SK-N-SH (cell line): ENCODE measurements at regions of chr7 and their contacts with region 1.

Region 1: DNA sequence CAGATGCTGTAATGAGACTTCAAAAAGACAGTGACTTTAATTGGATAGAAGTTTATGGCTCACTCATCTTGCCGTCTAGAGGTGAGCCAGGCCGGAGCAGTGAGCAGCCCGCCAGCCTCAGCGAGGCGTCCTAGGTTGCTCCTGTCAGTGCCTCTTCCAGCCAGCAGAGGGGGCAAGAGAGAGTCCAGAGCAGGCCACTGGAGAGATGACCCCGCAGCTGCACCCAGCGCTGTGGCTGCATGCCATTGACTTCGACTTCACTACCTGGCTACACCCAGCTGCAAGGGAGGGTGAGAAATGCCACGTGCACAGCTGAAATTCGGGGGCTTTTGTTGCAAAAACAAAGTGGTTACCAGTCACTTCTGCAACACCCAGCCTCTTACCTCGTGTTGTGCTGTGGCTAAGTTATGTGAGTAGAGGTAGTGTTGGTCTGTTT is 26.5 kb downstream of the NUB1 start:
- DNase-seq: peak; percentile 91
- H3K4me3 ChIP-seq: no peak overlapping the region
- H3K27ac ChIP-seq: no peak overlapping the region
- H3K4me1 ChIP-seq: peaks cover 0 to 13% of the 10 kb centered on the region in 2 experiments; a peak in 2 of 4 replicates
- H3K27me3 ChIP-seq: no peaks in the 10 kb centered on the region
- CTCF ChIP-seq: peak; percentile 99
- EP300 ChIP-seq: no peak
- RAD21 ChIP-seq: peak; percentile 90

Region 2: DNA sequence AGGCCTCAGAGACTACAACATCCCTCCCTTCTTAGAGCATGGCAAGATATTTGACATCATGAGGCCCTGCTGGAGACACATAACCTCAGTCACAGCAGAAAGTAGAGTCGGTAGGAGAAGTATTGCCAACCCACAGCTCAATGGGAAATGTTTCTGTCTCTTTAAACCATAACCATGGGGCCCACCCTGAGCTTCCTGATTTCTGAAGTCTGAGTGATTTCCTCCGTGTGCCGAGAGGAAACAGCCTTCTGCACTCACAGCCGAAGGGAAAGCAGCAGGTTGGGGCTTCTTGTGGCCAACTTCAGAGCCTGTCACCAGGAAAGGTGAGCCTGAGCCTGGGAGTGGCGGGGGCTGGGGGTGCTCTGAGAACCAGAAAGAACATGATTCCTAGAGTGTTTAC is 651.8 kb before region 1 on chr7 and contains the start of gene GIMAP1:
- CTCF ChIA-PET with region 1: no interaction called
- POLR2A ChIA-PET with region 1: no interaction called
- DNase-seq: no peak
- H3K4me3 ChIP-seq: no peak within 1 kb of the TSS
- H3K27ac ChIP-seq: no peak within 1 kb of the TSS
- H3K4me1 ChIP-seq: no peaks in the 10 kb centered on the region
- H3K27me3 ChIP-seq: peaks cover 43% of the 10 kb centered on the region
- CTCF ChIP-seq: no peak
- EP300 ChIP-seq: no peak
- RAD21 ChIP-seq: no peak
- polyA plus RNA-seq, gene GIMAP1: not detected in 2 replicates

Region 3: DNA sequence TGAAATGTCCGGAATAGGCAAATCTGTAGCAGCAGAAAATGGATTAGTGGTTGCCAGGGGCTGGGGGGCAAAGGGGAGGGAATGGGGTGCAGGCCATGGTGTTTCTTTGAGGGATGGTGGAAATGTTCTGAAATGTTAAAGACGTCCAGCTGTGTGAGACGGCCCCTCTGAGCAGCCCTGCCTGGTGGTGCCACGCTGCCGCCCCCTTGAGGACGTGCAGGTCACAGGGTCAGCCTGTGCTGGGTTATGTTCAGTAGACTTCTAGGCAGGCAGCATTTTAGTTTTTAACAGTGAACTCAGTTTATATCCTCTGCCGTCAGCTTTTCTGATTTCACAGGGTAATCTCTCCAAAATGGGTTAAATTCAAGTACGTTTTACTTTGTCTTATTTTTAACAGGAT is 17.1 kb before region 1 on chr7:
- CTCF ChIA-PET with region 1: interaction called, 65 read pairs
- POLR2A ChIA-PET with region 1: no interaction called
- DNase-seq: peak; percentile 48
- H3K4me3 ChIP-seq: no peak overlapping the region
- H3K27ac ChIP-seq: no peak overlapping the region; a peak in 1 of 4 replicates
- H3K4me1 ChIP-seq: peaks cover 5 to 8% of the 10 kb centered on the region in 2 experiments; a peak in 2 of 4 replicates
- H3K27me3 ChIP-seq: no peaks in the 10 kb centered on the region
- CTCF ChIP-seq: peak; percentile 51
- EP300 ChIP-seq: no peak
- RAD21 ChIP-seq: peak; percentile 23; the same call in 1 of the 2 replicates

Region 4: GRCh38 chr7:151408839-151409666 is 40.9 kb after region 1 on chr7:
- CTCF ChIA-PET with region 1: interaction called, 28 read pairs
- POLR2A ChIA-PET with region 1: interaction called, 4 read pairs
- DNase-seq: peak; percentile 87
- H3K4me3 ChIP-seq: peak overlapping the region; percentile 59 to 61; a peak in 3 of 4 replicates
- H3K27ac ChIP-seq: peak overlapping the region in 1 of 2 experiments; percentile 85; a peak in 1 of 4 replicates
- H3K4me1 ChIP-seq: peaks cover 0 to 21% of the 10 kb centered on the region in 2 experiments; a peak in 2 of 4 replicates
- H3K27me3 ChIP-seq: peaks cover 59% of the 10 kb centered on the region
- CTCF ChIP-seq: no peak
- EP300 ChIP-seq: no peak
- RAD21 ChIP-seq: peak; percentile 49

Region 5: DNA sequence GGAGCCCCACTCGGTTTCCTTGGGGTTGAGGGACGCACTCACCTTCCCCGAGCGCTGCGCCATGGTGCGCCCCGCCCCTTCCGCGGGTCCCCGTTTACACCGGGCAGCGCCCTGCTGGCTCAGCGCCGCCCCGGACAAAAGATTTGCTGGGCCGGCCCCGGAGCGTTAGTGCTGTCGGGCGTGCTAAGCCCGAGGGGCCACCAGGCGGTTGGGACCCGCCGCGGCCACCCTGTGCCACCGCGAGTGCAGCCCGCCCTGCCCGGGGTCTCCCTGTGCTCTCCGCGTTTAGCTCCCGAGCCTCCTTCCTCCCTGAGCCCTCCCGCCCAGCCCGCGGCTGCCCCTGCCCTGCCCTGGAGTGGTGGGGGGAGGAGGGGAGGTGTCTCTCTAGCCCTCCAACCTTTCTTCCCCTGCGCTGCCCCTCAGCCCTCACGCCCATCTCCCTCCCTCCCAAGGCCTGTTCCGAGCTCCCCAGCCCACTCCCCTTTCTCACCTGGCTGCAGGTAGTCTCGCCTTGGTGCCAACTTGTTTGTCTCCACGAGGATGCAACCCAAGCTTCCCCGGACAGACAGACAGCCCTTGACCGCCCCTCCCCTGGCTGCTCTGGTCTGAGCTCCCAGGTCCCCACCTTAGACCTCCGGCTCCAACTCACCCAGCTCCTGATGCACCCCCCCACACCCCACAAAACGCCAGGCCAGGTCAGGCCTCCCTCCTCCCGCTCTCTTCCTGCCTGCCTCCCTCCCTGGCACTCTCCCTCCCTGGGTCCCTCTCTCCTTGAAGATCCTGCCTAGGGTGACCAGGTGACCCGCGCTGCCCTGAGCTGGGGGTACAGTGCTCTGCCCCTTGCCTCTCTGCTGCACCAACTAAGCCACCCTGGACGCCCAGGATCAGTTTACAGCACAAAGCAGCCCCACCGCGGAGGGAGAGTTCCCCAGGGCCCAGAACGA is 72.0 kb after region 1 on chr7 and contains the start of gene CRYGN:
- CTCF ChIA-PET with region 1: interaction called, 126 read pairs
- POLR2A ChIA-PET with region 1: no interaction called
- DNase-seq: peak; percentile 78
- H3K4me3 ChIP-seq: peak within 1 kb of the TSS in 1 of 2 experiments; percentile 19; a peak in 1 of 4 replicates
- H3K27ac ChIP-seq: no peak within 1 kb of the TSS
- H3K4me1 ChIP-seq: peaks cover 0 to 20% of the 10 kb centered on the region in 2 experiments; a peak in 2 of 4 replicates
- H3K27me3 ChIP-seq: no peaks in the 10 kb centered on the region; the same call in 1 of the 2 replicates
- CTCF ChIP-seq: no peak
- EP300 ChIP-seq: no peak
- RAD21 ChIP-seq: no peak
- polyA plus RNA-seq, gene CRYGN: not detected in 2 replicates